Activated CD4-positive, alpha-beta T cell treated with anti-CD3 and anti-CD28 coated beads for 36 hours (primary cell): ENCODE measurements at regions of chr3 and their contacts with region 1.

Region 1: GRCh38 chr3:101518421-101518871 is 5.4 kb upstream of the SENP7 start:
- DNase-seq: peak; percentile 67
- ATAC-seq: peak; percentile 93
- H3K4me3 Mint-ChIP-seq: peak overlapping the region; percentile 63
- H3K27ac Mint-ChIP-seq: peak overlapping the region; percentile 92
- H3K4me1 Mint-ChIP-seq: peaks cover 58% of the 10 kb centered on the region
- H3K27me3 Mint-ChIP-seq: no peaks in the 10 kb centered on the region

Region 2: GRCh38 chr3:101391413-101391950 is 127.0 kb before region 1 on chr3:
- CTCF ChIA-PET with region 1: no interaction called
- POLR2A ChIA-PET with region 1: interaction called, 6 read pairs
- intact Hi-C with region 1: loop called (anchors 1 to 5 kb)
- DNase-seq: no peak
- ATAC-seq: no peak
- H3K4me3 Mint-ChIP-seq: no peak overlapping the region
- H3K27ac Mint-ChIP-seq: peak overlapping the region; percentile 35
- H3K4me1 Mint-ChIP-seq: peaks cover 36% of the 10 kb centered on the region
- H3K27me3 Mint-ChIP-seq: no peaks in the 10 kb centered on the region

Region 3: GRCh38 chr3:101544161-101544850 is 25.9 kb after region 1 on chr3:
- CTCF ChIA-PET with region 1: interaction called, 5 read pairs
- POLR2A ChIA-PET with region 1: interaction called, 4 read pairs
- intact Hi-C with region 1: loop called in 1 of 2 experiments (anchors 1 kb)
- DNase-seq: no peak
- ATAC-seq: peak; percentile 71
- H3K4me3 Mint-ChIP-seq: no peak overlapping the region
- H3K27ac Mint-ChIP-seq: peak overlapping the region; percentile 53
- H3K4me1 Mint-ChIP-seq: peaks cover 29% of the 10 kb centered on the region
- H3K27me3 Mint-ChIP-seq: no peaks in the 10 kb centered on the region